Posterior vena cava (tissue), 2 donors: ENCODE measurements at regions of chr20 and their contacts with region 1.

Region 1: DNA sequence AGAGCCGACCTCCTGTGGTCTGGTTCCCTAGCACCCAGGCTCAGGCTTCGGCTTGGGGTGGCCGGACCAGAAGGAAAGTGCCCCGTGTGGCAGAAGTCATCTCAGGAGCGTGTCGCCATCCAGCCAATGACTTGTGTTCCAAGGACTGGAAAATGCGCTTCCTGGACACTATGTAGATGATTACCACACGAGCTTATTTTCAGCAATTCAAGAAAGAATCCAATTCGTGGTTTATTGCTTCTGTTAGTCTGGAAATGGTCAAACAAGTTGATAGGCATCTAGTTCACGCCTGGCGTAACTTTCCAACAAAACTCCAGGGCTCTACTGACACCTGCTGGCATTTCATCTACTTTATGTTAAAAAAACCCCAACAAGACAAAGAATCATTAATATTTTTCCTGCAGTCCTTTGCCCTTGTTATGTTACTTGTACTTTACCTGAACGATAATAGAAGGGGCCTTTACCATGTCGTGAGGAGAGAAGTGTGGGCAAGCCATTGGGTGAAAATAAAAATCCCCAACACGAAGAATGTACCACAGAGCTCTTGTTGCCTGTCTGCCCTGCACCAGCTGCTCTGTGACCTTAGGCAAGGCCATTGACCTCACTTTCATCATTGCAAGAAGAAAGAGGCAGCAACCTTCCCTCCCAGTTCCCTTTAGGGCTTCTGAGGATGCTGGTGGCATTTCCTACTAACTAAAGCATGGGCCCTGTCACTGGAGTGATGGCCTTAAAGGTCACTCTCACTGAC is 154.7 kb upstream of the LAMP5 start:
- DNase-seq: no peak

Region 2: GRCh38 chr20:8153281-8153908 is 1206.3 kb before region 1 on chr20:
- intact Hi-C with region 1: no loop called
- DNase-seq: no peak

Region 3: GRCh38 chr20:8756410-8756809 is 603.3 kb before region 1 on chr20:
- intact Hi-C with region 1: loop called (anchors 10 kb)
- DNase-seq: peak; percentile 72

Region 4: GRCh38 chr20:8764344-8764962 is 595.3 kb before region 1 on chr20:
- intact Hi-C with region 1: loop called (anchors 10 kb)
- DNase-seq: no peak

Region 5: GRCh38 chr20:8842525-8842924 is 517.2 kb before region 1 on chr20:
- intact Hi-C with region 1: loop called in 1 of 2 experiments (anchors 10 kb)
- DNase-seq: no peak

Region 6: DNA sequence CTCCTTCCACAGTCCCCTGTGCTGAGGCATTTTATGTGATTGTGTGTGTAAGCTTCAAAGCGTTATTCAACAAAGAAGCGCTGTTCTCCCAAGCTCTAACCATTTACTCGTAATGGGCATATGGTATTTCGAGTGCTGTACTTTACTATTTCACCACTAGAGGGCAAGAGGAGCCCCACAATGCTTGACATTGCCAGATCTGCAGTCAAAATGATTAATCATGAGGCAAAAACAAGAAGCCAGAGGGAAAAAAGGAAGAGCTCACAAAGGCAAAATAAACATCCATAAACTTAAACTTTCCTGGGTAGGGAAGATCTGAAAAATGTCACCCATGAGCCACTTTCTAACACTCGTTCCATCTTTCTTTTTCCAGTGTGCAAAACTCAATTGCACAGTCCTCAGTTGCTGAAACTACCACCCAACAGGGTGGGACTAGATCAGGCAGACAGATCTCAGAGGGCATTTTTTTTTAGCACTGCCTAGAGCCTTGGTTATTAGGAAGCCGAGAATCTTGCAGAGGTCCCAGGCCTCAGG is 505.9 kb before region 1 on chr20:
- intact Hi-C with region 1: loop called (anchors 10 kb)
- DNase-seq: no peak

Region 7: GRCh38 chr20:9068851-9069663 is 290.7 kb before region 1 on chr20 and contains the start of gene PLCB4:
- intact Hi-C with region 1: loop called in 1 of 2 experiments (anchors 10 kb)
- DNase-seq: peak; percentile 81
- total RNA-seq, gene PLCB4: 40.4 to 53.3 TPM

Region 8: DNA sequence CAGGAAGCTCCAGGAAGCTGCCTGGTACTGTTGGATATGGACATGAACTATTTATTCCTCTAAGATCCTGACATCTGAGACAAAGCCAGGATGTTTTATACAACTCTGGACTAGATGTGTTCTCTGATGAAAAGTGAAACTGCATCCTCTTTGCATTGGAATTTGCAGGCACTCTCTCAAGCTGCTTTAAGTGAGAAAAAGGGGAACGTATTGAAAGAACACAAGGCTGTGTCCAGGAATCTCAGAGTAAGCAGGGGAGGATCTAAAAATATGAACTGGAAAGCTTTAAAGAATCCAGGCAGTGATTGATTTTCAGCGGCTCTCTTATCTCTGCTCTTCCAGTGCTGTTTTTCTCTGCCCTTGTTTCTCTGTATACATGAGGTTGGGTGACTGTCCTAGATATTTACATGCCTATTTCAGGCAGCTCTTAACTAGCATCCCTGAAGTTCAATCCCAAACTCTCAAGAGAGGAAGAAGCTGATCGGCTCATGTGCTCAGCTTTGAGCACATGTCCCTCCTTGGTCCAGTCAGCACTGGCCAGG is 97.0 kb before region 1 on chr20:
- intact Hi-C with region 1: loop called in 1 of 2 experiments (anchors 5 kb)
- DNase-seq: no peak